ENCODE measurements at regions of chr1 and their contacts with region 1.

Region 1: DNA sequence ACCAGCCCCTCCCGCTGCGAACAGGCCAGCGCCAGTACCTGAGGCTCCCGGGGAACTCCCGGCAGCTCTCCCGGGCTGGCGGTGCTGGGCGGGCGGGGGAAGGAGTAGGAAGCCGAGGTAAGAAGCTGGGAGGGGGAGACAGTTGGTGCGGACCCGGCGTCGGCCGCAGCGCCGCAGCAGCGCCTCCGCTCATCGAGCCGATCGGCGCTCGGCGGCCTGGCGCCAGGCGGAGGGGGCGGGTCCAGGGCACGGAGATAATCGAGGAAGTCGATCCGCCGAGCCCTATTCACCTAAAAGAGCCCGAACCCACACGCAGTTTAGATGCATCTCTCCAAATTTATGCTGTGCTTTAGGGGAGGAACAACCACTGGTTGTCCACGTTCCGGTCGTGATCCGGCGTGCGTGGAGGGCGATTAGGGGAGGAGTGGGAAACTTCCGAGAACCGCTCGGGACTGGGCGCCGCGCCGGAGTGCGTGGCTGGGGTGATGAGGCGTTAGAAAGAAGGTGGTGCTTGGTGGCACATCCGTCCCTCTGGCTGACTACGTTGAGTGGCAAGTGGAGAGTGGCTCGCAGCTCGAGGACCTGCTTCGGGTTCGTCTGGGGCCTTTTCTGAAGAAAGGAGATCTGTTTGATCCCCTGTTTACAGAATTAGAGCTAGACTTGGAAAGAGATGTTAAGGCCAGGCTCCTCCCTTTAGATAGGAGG is at the start of gene VAMP4:
- DNase-seq: peak; percentile 94
- H3K4me3 ChIP-seq: peak within 1 kb of the TSS; percentile 93
- H3K27ac ChIP-seq: peak within 1 kb of the TSS; percentile 93
- H3K4me1 ChIP-seq: peaks cover 23% of the 10 kb centered on the region
- H3K27me3 ChIP-seq: no peaks in the 10 kb centered on the region
- CTCF ChIP-seq: no peak
- total RNA-seq, gene VAMP4: 8.9 and 12.7 TPM in 2 replicates

Region 2: GRCh38 chr1:170685166-170685565 is 1056.9 kb before region 1 on chr1:
- CTCF ChIA-PET with region 1: no interaction called
- POLR2A ChIA-PET with region 1: no interaction called
- intact Hi-C with region 1: no loop called
- DNase-seq: no peak
- H3K4me3 ChIP-seq: no peak overlapping the region
- H3K27ac ChIP-seq: no peak overlapping the region
- H3K4me1 ChIP-seq: no peaks in the 10 kb centered on the region
- H3K27me3 ChIP-seq: peaks cover 3% of the 10 kb centered on the region
- CTCF ChIP-seq: no peak

Region 3: GRCh38 chr1:171595324-171595723 is 146.7 kb before region 1 on chr1:
- CTCF ChIA-PET with region 1: no interaction called
- POLR2A ChIA-PET with region 1: no interaction called
- intact Hi-C with region 1: no loop called
- DNase-seq: no peak
- H3K4me3 ChIP-seq: no peak overlapping the region
- H3K27ac ChIP-seq: no peak overlapping the region
- H3K4me1 ChIP-seq: peaks cover 6% of the 10 kb centered on the region
- H3K27me3 ChIP-seq: no peaks in the 10 kb centered on the region
- CTCF ChIP-seq: no peak

Region 4: GRCh38 chr1:171781176-171781875 is 39.3 kb after region 1 on chr1 and contains the start of gene METTL13:
- CTCF ChIA-PET with region 1: interaction called, 14 read pairs
- POLR2A ChIA-PET with region 1: no interaction called
- intact Hi-C with region 1: loop called (anchors 2 kb)
- DNase-seq: peak; percentile 100
- H3K4me3 ChIP-seq: peak within 1 kb of the TSS; percentile 56
- H3K27ac ChIP-seq: peak within 1 kb of the TSS; percentile 78
- H3K4me1 ChIP-seq: peaks cover 4% of the 10 kb centered on the region
- H3K27me3 ChIP-seq: no peaks in the 10 kb centered on the region
- CTCF ChIP-seq: no peak
- total RNA-seq, gene METTL13: 46.5 and 49.9 TPM in 2 replicates

Region 5: DNA sequence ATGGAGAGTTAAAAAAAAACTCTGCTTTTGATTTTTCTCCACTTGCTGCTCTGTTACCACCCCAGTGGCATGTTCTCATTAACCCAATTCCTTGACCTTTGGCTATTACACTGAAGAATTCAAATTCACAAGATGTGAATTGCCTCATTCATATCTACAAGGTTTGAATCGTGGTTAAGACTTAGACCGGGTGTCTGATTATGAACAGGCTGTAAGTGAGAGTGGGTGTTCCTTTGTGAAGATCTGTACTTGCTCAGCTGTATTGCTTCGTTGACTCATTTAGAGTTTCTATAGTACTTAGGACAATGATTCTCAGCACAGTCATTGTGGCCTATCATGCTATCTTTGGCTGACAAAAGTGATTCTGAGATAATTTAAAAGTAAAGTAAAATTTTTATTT is 135.7 kb after region 1 on chr1:
- CTCF ChIA-PET with region 1: no interaction called
- POLR2A ChIA-PET with region 1: no interaction called
- intact Hi-C with region 1: no loop called
- DNase-seq: no peak
- H3K4me3 ChIP-seq: no peak overlapping the region
- H3K27ac ChIP-seq: no peak overlapping the region
- H3K4me1 ChIP-seq: no peaks in the 10 kb centered on the region
- H3K27me3 ChIP-seq: no peaks in the 10 kb centered on the region
- CTCF ChIP-seq: no peak

Region 6: DNA sequence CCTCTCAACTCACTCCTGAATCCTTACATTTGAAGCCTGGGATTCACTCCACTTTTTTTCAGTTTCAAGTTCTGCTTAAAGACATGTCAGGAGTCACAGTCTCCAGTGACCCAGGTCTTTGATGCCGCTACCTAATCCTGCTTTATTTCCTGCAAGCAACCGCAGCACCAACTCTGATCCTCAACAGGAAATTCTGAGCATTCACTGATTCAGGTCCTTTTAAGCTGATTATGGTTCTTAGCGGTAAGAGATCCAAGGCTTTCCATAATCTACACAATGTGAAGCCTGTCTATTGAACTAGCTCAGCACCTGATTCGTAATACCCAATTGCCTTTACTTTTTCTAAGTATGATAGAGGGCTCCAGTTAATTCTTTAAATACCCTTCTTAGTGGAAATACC is 745.5 kb after region 1 on chr1:
- CTCF ChIA-PET with region 1: no interaction called
- POLR2A ChIA-PET with region 1: no interaction called
- intact Hi-C with region 1: no loop called
- DNase-seq: peak; percentile 36
- H3K4me3 ChIP-seq: no peak overlapping the region
- H3K27ac ChIP-seq: no peak overlapping the region
- H3K4me1 ChIP-seq: peaks cover 4% of the 10 kb centered on the region
- H3K27me3 ChIP-seq: peaks cover 7% of the 10 kb centered on the region
- CTCF ChIP-seq: no peak

Measured in A673 (cell line).